Body of pancreas (tissue), 4 donors: ENCODE measurements at regions of chr1 and their contacts with region 1.

Region 1: GRCh38 chr1:2539312-2539907 is 9.3 kb upstream of the HES5 start:
- DNase-seq: no peak
- ATAC-seq: no peak
- H3K4me3 ChIP-seq: no peak overlapping the region
- H3K27ac ChIP-seq: no peak overlapping the region
- H3K4me1 ChIP-seq: no peaks in the 10 kb centered on the region
- H3K27me3 ChIP-seq: peaks cover 0 to 4% of the 10 kb centered on the region in 2 donors
- CTCF ChIP-seq: peak in 4 of 7 experiments; percentile 5 to 18 (median 8)
- POLR2A ChIP-seq: no peak

Region 2: GRCh38 chr1:2451744-2452143 is 87.7 kb before region 1 on chr1:
- intact Hi-C with region 1: no loop called
- DNase-seq: no peak
- ATAC-seq: no peak
- H3K4me3 ChIP-seq: no peak overlapping the region
- H3K27ac ChIP-seq: no peak overlapping the region
- H3K4me1 ChIP-seq: no peaks in the 10 kb centered on the region
- H3K27me3 ChIP-seq: no peaks in the 10 kb centered on the region
- CTCF ChIP-seq: no peak
- POLR2A ChIP-seq: no peak

Region 3: DNA sequence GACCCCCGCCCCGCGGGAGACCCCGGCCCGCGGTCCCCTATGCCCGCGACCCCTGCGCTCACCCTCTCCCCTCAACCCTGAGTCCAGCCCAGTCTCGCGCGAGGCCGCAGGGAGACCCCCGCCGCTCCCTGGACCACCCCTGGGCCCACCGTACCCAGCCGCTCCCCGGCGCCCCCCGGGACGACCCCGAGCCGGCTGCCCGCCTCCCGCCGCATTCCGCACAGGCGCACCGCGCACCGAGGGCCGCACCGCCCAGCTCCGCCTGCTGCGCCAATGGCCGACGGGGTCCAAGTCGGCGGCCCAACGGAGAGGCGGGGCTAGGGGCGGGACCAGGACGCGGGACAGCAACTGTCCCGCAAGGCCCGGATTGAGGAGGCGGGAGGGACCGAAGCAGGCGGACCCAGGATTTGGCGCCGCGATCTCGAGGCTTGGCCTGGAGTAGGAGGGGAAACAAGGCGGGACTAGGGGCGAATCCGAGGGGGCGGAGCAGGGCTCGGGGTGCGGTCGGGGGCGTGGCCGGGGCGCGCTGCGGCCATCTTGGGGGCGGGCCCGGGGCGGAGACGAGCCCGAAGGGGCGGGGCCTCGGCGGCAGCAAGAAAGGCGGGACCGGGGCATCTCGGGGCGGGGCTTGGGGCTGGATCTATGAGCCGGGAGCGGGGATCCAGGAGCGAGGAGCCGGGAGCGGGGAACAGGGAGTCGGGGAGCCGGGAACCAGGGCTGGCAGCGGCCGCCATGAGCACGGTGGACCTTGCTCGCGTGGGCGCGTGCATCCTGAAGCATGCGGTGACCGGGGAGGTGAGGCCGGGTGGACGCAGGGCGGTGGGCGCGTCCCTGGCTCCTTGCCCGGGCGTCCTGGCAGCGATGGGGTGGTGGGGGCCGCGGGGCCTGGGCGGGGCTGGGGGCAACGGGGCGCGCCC is 47.0 kb after region 1 on chr1 and contains the start of gene PRXL2B:
- intact Hi-C with region 1: loop called (anchors 10 kb)
- DNase-seq: peak; percentile 99 to 100 (median 99)
- ATAC-seq: peak; percentile 91
- H3K4me3 ChIP-seq: peak within 1 kb of the TSS; percentile 82 to 85
- H3K27ac ChIP-seq: peak within 1 kb of the TSS; percentile 94 to 99 (median 97)
- H3K4me1 ChIP-seq: peaks cover 39% of the 10 kb centered on the region
- H3K27me3 ChIP-seq: no peaks in the 10 kb centered on the region
- CTCF ChIP-seq: peak in 1 of 7 experiments; percentile 16
- POLR2A ChIP-seq: peak; percentile 44 to 76 (median 72)
- total RNA-seq, gene PRXL2B: 5.6 to 8.8 TPM

Region 4: DNA sequence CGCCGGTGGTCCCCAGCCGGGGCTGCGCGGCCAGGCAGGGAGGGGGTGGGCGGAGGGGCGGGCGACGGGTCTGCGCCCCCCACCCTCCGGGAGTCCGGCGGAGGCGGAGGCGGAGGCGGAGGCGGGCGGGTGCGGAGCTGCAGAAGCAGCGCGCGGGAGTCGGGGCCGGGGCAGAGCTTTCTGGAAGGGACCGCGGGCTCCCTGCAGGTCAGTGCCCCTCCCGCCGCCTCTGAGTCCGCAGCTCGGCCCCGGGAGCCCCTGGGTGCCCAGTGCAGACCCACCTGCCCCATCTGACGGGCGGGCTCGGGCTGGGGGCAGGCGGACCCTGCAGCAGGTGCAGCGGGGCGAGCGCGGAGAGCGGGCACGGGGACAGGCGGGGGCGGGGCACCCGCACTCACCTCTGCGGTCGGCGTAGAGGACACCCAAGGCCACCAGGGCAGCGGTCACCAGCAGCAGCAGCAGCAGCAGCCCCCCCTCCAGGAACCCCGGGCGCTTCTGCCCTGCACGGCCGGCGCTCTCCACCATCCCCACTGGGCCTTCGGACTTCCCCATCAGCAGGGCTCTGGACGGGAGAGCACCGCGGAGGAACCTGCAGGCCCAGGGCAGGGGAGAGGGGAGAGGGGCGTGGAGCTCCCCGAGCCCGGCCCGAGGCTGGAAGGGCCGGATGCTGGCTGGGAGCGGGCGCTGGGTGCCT is 89.7 kb after region 1 on chr1:
- intact Hi-C with region 1: no loop called
- DNase-seq: no peak
- ATAC-seq: no peak
- H3K4me3 ChIP-seq: no peak overlapping the region
- H3K27ac ChIP-seq: no peak overlapping the region
- H3K4me1 ChIP-seq: peaks cover 13% of the 10 kb centered on the region
- H3K27me3 ChIP-seq: peaks cover 0 to 24% of the 10 kb centered on the region in 2 donors
- CTCF ChIP-seq: no peak
- POLR2A ChIP-seq: no peak